Activated CD4-positive, alpha-beta memory T cell treated with anti-CD3 and anti-CD28 coated beads, Interleukin-2, amount 10 ng/mL, durations not matched to agents 7 days and 5 days (primary cell): ENCODE measurements at regions of chr18 and their contacts with region 1.

Region 1: DNA sequence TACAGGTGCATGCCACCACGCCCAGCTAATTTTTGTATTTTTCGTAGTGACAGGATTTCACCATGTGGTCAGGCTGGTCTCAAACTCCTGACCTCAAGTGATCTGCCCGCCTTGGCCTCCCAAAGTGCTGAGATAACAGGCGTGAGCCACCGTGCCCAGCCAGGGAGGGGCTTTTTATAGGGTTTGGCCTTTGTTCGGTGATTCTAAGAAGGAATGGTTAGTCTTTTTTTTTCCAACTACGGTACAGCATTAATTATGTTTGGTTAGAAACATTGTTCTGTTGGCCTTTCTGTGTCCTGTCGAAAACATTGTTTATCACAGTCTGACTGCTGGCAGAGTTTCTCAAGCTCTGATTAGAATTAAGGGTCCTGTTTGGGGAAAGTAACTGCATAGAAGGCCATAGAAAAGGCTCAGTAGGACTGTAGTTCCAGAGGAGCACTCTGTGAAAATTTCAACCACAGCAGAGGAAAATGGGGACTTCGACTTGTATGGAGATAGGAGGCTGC is 19.3 kb upstream of the SMCHD1 start:
- DNase-seq: peak; percentile 30
- H3K4me3 Mint-ChIP-seq: peak overlapping the region; percentile 68
- H3K27ac Mint-ChIP-seq: peak overlapping the region; percentile 100
- H3K4me1 Mint-ChIP-seq: peaks cover 69% of the 10 kb centered on the region
- H3K27me3 Mint-ChIP-seq: no peaks in the 10 kb centered on the region

Region 2: GRCh38 chr18:2571200-2572143 is 64.7 kb before region 1 on chr18 and contains the starts of genes METTL4 and NDC80:
- CTCF ChIA-PET with region 1: interaction called, 5 read pairs
- POLR2A ChIA-PET with region 1: interaction called, 93 read pairs
- DNase-seq: peak; percentile 87
- H3K4me3 Mint-ChIP-seq: peak within 1 kb of the TSS; percentile 95
- H3K27ac Mint-ChIP-seq: peak within 1 kb of the TSS; percentile 96
- H3K4me1 Mint-ChIP-seq: peaks cover 55% of the 10 kb centered on the region
- H3K27me3 Mint-ChIP-seq: no peaks in the 10 kb centered on the region
- total RNA-seq, gene METTL4: 22.1 to 23.7 TPM
- total RNA-seq, gene NDC80: 78.0 to 78.9 TPM

Region 3: GRCh38 chr18:2589345-2590068 is 46.7 kb before region 1 on chr18:
- CTCF ChIA-PET with region 1: no interaction called
- POLR2A ChIA-PET with region 1: interaction called, 39 read pairs
- DNase-seq: no peak
- H3K4me3 Mint-ChIP-seq: no peak overlapping the region
- H3K27ac Mint-ChIP-seq: peak overlapping the region; percentile 71
- H3K4me1 Mint-ChIP-seq: peaks cover 45% of the 10 kb centered on the region
- H3K27me3 Mint-ChIP-seq: no peaks in the 10 kb centered on the region

Region 4: GRCh38 chr18:2606335-2606734 is 29.8 kb before region 1 on chr18:
- CTCF ChIA-PET with region 1: interaction called, 7 read pairs
- POLR2A ChIA-PET with region 1: interaction called, 121 read pairs
- DNase-seq: no peak
- H3K4me3 Mint-ChIP-seq: peak overlapping the region; percentile 60
- H3K27ac Mint-ChIP-seq: peak overlapping the region; percentile 88
- H3K4me1 Mint-ChIP-seq: peaks cover 47% of the 10 kb centered on the region
- H3K27me3 Mint-ChIP-seq: no peaks in the 10 kb centered on the region

Region 5: DNA sequence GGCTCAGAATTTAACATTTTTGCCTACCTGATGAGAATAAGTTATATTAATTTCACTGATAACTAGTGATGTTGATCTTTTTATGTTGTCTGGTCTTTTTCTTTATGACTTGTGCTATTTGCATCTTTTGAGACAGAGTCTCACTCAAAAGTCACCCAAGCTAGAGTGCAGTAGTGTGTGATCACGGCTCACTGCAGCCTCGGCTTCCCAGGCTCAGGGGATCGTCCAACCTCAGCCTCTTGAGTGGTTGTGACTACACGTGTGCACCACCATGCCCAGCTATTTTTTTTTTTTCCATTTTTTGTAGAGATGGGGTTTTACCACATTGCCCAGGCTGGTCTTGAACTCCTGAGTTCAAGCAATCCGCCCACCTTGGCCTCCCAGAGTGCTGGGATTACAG is 26.8 kb after region 1 on chr18:
- CTCF ChIA-PET with region 1: interaction called, 19 read pairs
- POLR2A ChIA-PET with region 1: interaction called, 486 read pairs
- DNase-seq: no peak
- H3K4me3 Mint-ChIP-seq: no peak overlapping the region
- H3K27ac Mint-ChIP-seq: no peak overlapping the region
- H3K4me1 Mint-ChIP-seq: peaks cover 58% of the 10 kb centered on the region
- H3K27me3 Mint-ChIP-seq: no peaks in the 10 kb centered on the region

Region 6: DNA sequence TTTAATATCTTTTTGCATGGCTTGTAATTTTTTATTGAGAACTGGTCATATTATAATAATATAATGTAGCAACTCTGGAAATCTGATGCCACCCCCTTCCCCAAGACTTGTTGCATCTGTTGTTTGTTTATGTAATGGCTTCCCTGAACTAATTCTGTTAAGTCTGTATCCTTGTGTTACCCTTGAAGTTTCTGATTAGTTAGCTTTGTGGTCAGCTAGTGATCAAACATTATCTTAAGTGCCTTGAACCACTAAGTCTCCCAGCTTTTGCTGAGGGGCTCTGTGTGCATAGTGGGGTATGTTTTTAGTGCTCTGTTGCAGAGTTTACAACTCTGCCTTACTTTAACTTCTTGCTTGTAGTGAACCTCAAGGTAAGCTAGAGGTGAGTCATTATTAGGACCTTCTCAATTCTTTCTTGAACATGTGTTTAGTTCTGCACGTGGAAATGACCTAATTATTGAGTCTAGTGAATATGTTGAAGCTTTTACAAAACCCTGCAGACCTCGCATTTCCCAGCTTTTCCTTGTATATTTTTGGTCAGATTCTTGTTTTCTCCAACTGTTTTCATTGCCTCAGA is 44.1 kb after region 1 on chr18:
- CTCF ChIA-PET with region 1: no interaction called
- POLR2A ChIA-PET with region 1: interaction called, 14 read pairs
- DNase-seq: no peak
- H3K4me3 Mint-ChIP-seq: no peak overlapping the region
- H3K27ac Mint-ChIP-seq: peak overlapping the region; percentile 79
- H3K4me1 Mint-ChIP-seq: peaks cover 64% of the 10 kb centered on the region
- H3K27me3 Mint-ChIP-seq: no peaks in the 10 kb centered on the region

Region 7: GRCh38 chr18:2687390-2688001 is 51.3 kb after region 1 on chr18:
- CTCF ChIA-PET with region 1: no interaction called
- POLR2A ChIA-PET with region 1: interaction called, 14 read pairs
- DNase-seq: no peak
- H3K4me3 Mint-ChIP-seq: peak overlapping the region; percentile 43
- H3K27ac Mint-ChIP-seq: peak overlapping the region; percentile 75
- H3K4me1 Mint-ChIP-seq: peaks cover 58% of the 10 kb centered on the region
- H3K27me3 Mint-ChIP-seq: no peaks in the 10 kb centered on the region